MCF 10A (cell line): ENCODE measurements at regions of chr4 and their contacts with region 1.

Region 1: GRCh38 chr4:89657931-89658700 is 178.8 kb downstream of the SNCA start:
- DNase-seq: peak; percentile 53
- H3K4me3 Mint-ChIP-seq: no peak overlapping the region
- H3K27ac Mint-ChIP-seq: peak overlapping the region; percentile 16
- H3K4me1 Mint-ChIP-seq: peaks cover 33% of the 10 kb centered on the region
- H3K27me3 Mint-ChIP-seq: no peaks in the 10 kb centered on the region
- CTCF ChIP-seq: peak; percentile 38

Region 2: DNA sequence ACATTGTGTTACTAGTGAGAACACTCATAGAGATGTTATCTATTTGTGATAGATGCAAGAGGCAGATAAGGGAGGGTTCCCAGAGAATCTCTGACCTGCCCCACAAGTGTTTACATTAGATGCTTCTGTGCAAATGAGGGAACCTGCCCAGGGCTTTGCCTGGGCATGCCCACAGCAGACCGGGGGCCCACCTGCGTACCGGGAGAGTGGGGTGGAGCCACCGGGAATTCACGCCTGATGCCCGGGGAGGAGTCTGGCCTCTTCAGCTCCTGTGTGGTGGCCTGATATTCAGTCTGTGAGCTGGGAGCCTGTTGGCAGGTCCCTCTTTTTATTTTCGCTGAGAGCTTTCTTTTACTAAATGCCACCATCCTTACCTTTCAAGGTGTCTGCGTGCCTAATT is 23.1 kb after region 1 on chr4:
- CTCF ChIA-PET with region 1: interaction called, 10 read pairs
- POLR2A ChIA-PET with region 1: interaction called, 67 read pairs
- intact Hi-C with region 1: loop called (anchors 2 kb)
- DNase-seq: peak; percentile 82
- H3K4me3 Mint-ChIP-seq: peak overlapping the region; percentile 91
- H3K27ac Mint-ChIP-seq: peak overlapping the region; percentile 94
- H3K4me1 Mint-ChIP-seq: peaks cover 18% of the 10 kb centered on the region
- H3K27me3 Mint-ChIP-seq: no peaks in the 10 kb centered on the region
- CTCF ChIP-seq: no peak

Region 3: GRCh38 chr4:89752932-89753581 is 94.9 kb after region 1 on chr4:
- CTCF ChIA-PET with region 1: interaction called, 3 read pairs
- POLR2A ChIA-PET with region 1: interaction called, 16 read pairs
- intact Hi-C with region 1: loop called (anchors 1 kb)
- DNase-seq: peak; percentile 76
- H3K4me3 Mint-ChIP-seq: peak overlapping the region; percentile 52
- H3K27ac Mint-ChIP-seq: peak overlapping the region; percentile 85
- H3K4me1 Mint-ChIP-seq: peaks cover 23% of the 10 kb centered on the region
- H3K27me3 Mint-ChIP-seq: no peaks in the 10 kb centered on the region
- CTCF ChIP-seq: no peak

Region 4: GRCh38 chr4:89868999-89869589 is 211.0 kb after region 1 on chr4:
- CTCF ChIA-PET with region 1: interaction called, 19 read pairs
- POLR2A ChIA-PET with region 1: interaction called, 4 read pairs
- intact Hi-C with region 1: loop called (anchors 1 kb)
- DNase-seq: peak; percentile 14
- H3K4me3 Mint-ChIP-seq: no peak overlapping the region
- H3K27ac Mint-ChIP-seq: no peak overlapping the region
- H3K4me1 Mint-ChIP-seq: no peaks in the 10 kb centered on the region
- H3K27me3 Mint-ChIP-seq: no peaks in the 10 kb centered on the region
- CTCF ChIP-seq: peak; percentile 47

Region 5: GRCh38 chr4:89904524-89904923 is 246.4 kb after region 1 on chr4:
- CTCF ChIA-PET with region 1: interaction called, 13 read pairs
- POLR2A ChIA-PET with region 1: interaction called, 3 read pairs
- intact Hi-C with region 1: loop called (anchors 1 kb)
- DNase-seq: no peak
- H3K4me3 Mint-ChIP-seq: no peak overlapping the region
- H3K27ac Mint-ChIP-seq: no peak overlapping the region
- H3K4me1 Mint-ChIP-seq: no peaks in the 10 kb centered on the region
- H3K27me3 Mint-ChIP-seq: no peaks in the 10 kb centered on the region
- CTCF ChIP-seq: no peak